AG04450 (cell line): ENCODE measurements at regions of chr3 and their contacts with region 1.

Region 1: DNA sequence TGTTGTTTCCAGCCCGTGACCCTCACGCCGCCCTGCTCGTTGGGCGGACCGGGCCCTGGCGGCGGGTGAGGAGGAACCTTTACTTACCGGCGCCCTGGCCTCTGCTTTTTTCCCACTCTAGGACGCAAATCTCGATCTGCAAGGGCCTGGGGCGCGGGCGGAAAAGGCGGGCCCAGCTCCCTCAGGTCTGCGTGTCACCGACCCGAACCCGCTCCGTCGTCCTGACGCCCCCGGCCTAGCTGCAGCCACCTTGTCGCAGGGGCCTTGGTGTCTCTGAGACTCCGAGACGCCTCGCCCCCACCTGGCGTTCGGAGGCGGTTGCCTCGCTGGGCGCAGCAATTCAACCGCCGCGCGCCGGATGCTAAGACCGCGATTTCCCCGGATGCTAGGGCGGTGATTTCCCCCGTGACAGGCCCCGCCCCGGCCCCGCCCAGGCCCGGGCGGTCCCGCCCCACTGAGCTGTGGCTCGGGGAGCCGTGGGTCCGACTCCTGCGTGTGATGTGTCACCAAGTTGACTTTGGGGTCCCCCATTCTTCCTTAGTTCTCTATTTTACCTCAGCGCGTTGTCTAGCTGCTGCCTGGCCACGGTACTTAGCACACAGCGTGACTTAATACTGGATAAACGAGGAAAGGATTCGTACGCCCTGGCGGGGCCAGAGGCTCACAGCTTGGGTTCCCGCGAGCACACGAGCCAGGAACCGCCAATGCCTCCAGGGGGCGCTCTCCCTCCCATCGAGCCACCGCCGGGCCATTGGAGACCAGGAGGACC is at the start of gene RPL39L:
- DNase-seq: peak; percentile 45
- H3K4me3 ChIP-seq: peak within 1 kb of the TSS; percentile 79
- H3K27ac ChIP-seq: peak within 1 kb of the TSS; percentile 57
- H3K27me3 ChIP-seq: peaks cover 9% of the 10 kb centered on the region
- CTCF ChIP-seq: peak; percentile 96
- polyA plus RNA-seq, gene RPL39L: 14.4 and 17.0 TPM in 2 replicates

Region 2: DNA sequence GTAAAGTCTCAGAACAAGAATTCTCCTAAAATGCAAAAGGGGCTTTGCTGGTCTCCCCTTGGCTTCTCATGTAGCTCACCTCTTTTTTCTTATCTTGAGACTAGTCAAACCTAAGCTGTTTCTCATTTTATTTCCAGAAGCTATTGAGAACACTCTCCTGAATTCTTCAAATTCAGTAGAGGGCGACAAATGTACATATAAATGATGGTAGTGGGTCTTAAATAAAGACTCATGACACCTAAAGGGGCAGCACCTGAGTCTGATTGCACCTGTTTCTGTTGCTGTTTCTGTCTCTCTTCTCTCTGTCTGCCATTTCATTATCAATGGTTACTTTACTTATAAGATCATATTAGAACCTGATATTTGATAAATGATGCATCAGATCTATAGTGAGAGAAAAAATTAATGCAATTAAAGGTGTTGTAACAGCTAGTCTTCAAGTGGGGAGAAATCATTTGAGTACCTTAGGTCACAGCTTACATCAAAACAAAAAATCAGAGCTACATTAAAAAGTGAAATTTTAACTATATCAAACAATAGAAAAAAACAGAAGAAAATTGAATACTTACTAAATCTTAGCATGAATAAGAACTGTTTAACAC is 289.8 kb before region 1 on chr3:
- CTCF ChIA-PET with region 1: interaction called, 14 read pairs
- POLR2A ChIA-PET with region 1: no interaction called
- DNase-seq: no peak
- H3K4me3 ChIP-seq: no peak overlapping the region
- H3K27ac ChIP-seq: no peak overlapping the region
- H3K27me3 ChIP-seq: peaks cover 27% of the 10 kb centered on the region
- CTCF ChIP-seq: peak; percentile 51

Region 3: DNA sequence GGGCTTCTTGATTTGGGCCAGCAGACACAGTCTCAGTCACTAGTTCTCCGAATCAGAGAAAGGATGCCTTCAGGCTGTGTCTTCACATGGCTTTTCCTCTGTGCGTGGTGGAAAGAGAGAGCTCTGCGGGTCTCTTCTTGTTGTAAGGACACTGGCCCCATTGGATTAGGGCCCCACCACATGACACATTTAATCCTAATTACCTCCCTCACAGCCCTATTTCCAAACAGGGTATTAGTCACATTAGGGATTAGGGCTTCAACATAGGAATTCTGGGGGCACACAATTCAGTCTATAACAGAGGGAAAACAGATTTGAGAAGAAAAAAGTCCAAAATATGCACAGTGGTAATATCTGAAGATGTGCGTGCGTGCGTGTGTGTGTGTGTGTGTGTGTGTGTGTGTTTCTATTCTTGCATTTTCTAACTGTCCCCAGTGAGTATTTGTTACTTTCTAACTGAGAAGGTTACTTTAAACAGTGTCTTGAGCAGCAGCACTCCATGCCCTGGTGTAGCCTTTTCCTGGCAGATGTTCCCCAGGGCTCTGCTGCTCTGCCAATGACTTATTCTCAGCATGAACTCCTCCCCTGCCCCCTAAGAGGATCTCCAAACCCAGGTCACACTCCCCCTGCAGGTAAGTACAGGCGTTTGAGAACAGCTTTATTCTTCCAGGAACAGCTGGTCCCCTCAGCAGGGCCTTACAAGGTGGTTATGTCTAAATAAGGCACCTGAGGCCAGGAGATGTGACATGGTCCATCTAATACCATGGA is 72.9 kb before region 1 on chr3:
- CTCF ChIA-PET with region 1: interaction called, 12 read pairs
- POLR2A ChIA-PET with region 1: no interaction called
- DNase-seq: no peak
- H3K4me3 ChIP-seq: no peak overlapping the region
- H3K27ac ChIP-seq: no peak overlapping the region
- H3K27me3 ChIP-seq: no peaks in the 10 kb centered on the region
- CTCF ChIP-seq: peak; percentile 45; the same call in 1 of the 2 replicates

Region 4: GRCh38 chr3:187101184-187102072 is 37.9 kb before region 1 on chr3:
- CTCF ChIA-PET with region 1: interaction called, 27 read pairs
- POLR2A ChIA-PET with region 1: no interaction called
- DNase-seq: peak; percentile 39
- H3K4me3 ChIP-seq: peak overlapping the region; percentile 48
- H3K27ac ChIP-seq: peak overlapping the region; percentile 69
- H3K27me3 ChIP-seq: no peaks in the 10 kb centered on the region
- CTCF ChIP-seq: no peak

Region 5: GRCh38 chr3:187120326-187120725 is 19.0 kb before region 1 on chr3:
- CTCF ChIA-PET with region 1: interaction called, 16 read pairs
- POLR2A ChIA-PET with region 1: no interaction called
- DNase-seq: no peak
- H3K4me3 ChIP-seq: no peak overlapping the region
- H3K27ac ChIP-seq: no peak overlapping the region
- H3K27me3 ChIP-seq: no peaks in the 10 kb centered on the region
- CTCF ChIP-seq: no peak

Region 6: DNA sequence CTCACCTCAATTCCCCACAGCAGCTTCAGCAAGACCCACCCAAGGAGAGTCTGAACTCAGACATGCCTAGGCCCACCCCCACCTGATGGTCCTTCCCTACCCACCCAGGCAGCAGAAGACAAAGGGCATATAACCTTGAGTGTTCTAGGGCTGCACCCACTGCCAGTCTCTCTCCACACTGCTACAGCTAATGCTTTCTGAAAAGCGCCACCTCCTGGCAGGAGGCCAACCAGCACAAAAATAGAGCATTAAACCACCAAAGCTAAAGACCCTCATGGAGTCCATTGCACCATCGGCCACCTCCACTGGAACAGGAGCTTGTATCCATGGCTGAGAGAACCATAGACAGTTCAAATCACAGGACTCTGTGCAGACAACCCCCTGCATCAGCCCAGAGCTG is 11.3 kb after region 1 on chr3:
- CTCF ChIA-PET with region 1: interaction called, 67 read pairs
- POLR2A ChIA-PET with region 1: no interaction called
- DNase-seq: no peak
- H3K4me3 ChIP-seq: no peak overlapping the region
- H3K27ac ChIP-seq: no peak overlapping the region
- H3K27me3 ChIP-seq: peaks cover 19% of the 10 kb centered on the region
- CTCF ChIP-seq: no peak

Region 7: DNA sequence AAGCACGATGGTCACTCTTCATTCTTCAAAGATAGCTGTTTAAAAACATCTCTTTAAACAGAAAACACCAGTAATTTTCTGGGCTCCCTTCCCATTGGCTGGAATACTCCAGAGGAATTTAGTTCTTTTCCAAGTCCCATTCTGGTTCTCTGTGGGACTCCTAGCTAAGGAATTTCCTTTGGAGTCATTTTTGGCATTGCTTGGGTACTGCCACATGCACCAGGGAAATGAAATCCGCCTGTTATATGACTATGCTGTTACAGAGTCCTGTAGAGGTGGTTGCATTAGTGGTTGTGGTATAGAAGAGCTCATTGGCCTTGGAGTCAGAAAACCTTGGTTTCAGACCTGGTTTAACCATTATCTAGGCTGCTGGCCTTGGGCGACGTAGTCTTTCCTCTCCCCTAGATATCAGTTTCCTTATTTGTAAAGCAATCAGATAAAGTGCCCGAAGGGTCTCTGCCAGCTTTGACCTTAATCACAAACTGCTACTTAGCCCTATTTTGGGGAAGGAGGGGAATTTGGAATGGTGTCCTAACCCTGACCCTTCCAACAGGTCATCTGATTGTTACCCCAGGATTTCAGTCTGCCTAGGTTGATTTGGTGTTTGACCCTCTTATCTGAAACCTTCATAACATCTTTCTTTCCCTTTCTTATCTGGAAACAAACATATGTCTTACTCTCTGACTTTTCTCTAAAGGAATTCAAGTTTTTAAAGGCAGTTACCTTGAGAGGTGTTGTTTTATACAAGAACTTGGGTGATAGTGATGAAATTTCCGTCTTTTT is 71.4 kb after region 1 on chr3:
- CTCF ChIA-PET with region 1: interaction called, 13 read pairs
- POLR2A ChIA-PET with region 1: no interaction called
- DNase-seq: no peak
- H3K4me3 ChIP-seq: no peak overlapping the region
- H3K27ac ChIP-seq: no peak overlapping the region
- H3K27me3 ChIP-seq: no peaks in the 10 kb centered on the region
- CTCF ChIP-seq: no peak